GM12878 (cell line): ENCODE measurements at regions of chr3 and their contacts with region 1.

Region 1: GRCh38 chr3:185942907-185943759 is 5.3 kb upstream of the TRA2B start:
- DNase-seq: peak; percentile 51
- ATAC-seq: peak; percentile 98
- H3K4me3 ChIP-seq: no peak overlapping the region
- H3K27ac ChIP-seq: no peak overlapping the region
- H3K4me1 ChIP-seq: peaks cover 5% of the 10 kb centered on the region; the same call in 1 of the 2 replicates
- H3K27me3 ChIP-seq: 0 out of 4 replicates have a peak, but pooled peaks cover 0 to 3% of the 10 kb centered on the region in 2 experiments
- CTCF ChIP-seq: peak; percentile 94 to 99 (median 99)
- EP300 ChIP-seq: no peak
- POLR2A ChIP-seq: no peak
- RAD21 ChIP-seq: peak; percentile 67

Region 2: DNA sequence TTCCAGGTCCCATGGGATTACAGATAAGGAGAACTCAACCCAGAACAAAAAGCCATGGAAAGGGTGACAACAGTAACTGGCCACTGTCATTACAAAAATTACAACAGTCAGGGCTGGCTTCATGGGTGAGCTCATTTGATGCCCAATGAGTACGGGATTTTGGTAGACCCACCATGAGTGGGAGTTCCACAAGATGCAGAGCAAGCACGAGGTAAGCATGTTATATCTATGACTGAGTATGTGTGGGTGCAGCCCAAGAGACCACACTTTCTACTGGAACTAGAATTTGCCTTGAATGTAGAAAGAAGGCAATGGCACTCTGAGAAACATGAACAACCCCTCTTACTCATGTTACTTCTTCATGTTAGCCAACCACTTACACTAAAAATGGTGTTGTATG is 201.5 kb before region 1 on chr3:
- CTCF ChIA-PET with region 1: no interaction called
- POLR2A ChIA-PET with region 1: no interaction called
- RAD21 ChIA-PET with region 1: no interaction called
- SMC1A ChIA-PET with region 1: no interaction called
- in situ Hi-C with region 1: no loop called
- intact Hi-C with region 1: no loop called
- DNase-seq: no peak
- ATAC-seq: no peak
- H3K4me3 ChIP-seq: no peak overlapping the region
- H3K27ac ChIP-seq: no peak overlapping the region
- H3K4me1 ChIP-seq: peaks cover 14% of the 10 kb centered on the region
- H3K27me3 ChIP-seq: no peaks in the 10 kb centered on the region; a peak in 1 of 4 replicates
- CTCF ChIP-seq: no peak
- EP300 ChIP-seq: no peak
- POLR2A ChIP-seq: no peak
- RAD21 ChIP-seq: no peak

Region 3: DNA sequence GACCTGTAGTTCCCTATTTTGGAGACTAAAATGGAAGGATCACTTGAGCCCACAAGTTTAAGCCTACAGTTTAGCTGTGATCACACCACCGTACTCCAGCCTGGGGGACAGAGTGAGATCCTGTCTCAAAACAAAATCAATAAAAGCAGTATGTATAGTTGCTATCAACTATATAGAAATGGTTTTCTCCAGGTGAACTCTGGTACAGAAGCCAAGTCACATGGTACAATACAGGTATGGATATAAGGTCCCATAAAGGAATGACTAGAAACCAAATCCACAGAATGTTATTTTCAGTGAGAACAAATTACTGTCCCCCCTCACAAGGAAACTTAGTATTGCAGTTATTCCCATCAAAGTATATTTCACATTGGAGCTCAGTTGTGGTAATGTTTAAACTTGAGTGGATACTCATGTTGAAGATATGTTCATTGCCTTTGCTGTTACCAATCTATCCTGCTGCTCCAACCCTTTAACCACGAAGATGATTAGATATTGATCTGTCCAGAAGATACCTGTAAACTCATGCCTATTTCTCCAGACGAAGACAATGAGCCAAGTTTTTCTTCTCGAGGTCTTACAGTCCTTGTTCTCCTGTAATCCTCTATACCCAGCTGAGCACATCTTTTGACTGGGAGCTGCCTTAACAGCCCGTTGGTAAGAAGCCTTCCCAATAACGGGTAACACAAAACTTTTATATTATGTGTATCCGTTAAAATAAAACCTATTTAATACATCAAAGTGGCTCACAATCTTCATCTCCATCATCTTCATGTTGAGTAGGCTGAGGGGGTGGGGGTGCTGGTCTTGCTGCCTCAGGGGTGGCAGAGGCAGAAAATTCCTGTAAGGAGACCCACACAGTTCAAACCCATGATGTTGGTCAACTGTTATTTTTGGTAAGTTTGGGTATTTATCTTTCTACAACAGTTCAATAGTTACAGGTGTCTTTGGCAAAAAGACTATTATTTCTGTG is 29.9 kb before region 1 on chr3:
- CTCF ChIA-PET with region 1: interaction called, 32 read pairs
- POLR2A ChIA-PET with region 1: interaction called, 5 read pairs
- RAD21 ChIA-PET with region 1: interaction called, 4 read pairs
- SMC1A ChIA-PET with region 1: interaction called, 3 read pairs
- in situ Hi-C with region 1: no loop called
- intact Hi-C with region 1: no loop called
- DNase-seq: no peak
- ATAC-seq: peak; percentile 31
- H3K4me3 ChIP-seq: no peak overlapping the region
- H3K27ac ChIP-seq: no peak overlapping the region
- H3K4me1 ChIP-seq: no peaks in the 10 kb centered on the region
- H3K27me3 ChIP-seq: no peaks in the 10 kb centered on the region
- CTCF ChIP-seq: no peak
- EP300 ChIP-seq: no peak
- POLR2A ChIP-seq: no peak; the same call in 1 of the 2 replicates
- RAD21 ChIP-seq: no peak

Region 4: GRCh38 chr3:185968168-185968567 is 25.0 kb after region 1 on chr3:
- CTCF ChIA-PET with region 1: interaction called, 49 read pairs
- POLR2A ChIA-PET with region 1: interaction called, 4 read pairs
- RAD21 ChIA-PET with region 1: interaction called, 12 read pairs
- SMC1A ChIA-PET with region 1: interaction called, 11 read pairs
- in situ Hi-C with region 1: no loop called
- intact Hi-C with region 1: no loop called
- DNase-seq: no peak
- ATAC-seq: no peak
- H3K4me3 ChIP-seq: no peak overlapping the region
- H3K27ac ChIP-seq: no peak overlapping the region
- H3K4me1 ChIP-seq: no peaks in the 10 kb centered on the region
- H3K27me3 ChIP-seq: no peaks in the 10 kb centered on the region
- CTCF ChIP-seq: no peak
- EP300 ChIP-seq: no peak
- POLR2A ChIP-seq: no peak
- RAD21 ChIP-seq: no peak

Region 5: GRCh38 chr3:186108941-186109865 is 166.1 kb after region 1 on chr3 and contains the start of gene ETV5:
- CTCF ChIA-PET with region 1: interaction called, 13 read pairs
- POLR2A ChIA-PET with region 1: interaction called, 4 read pairs
- RAD21 ChIA-PET with region 1: no interaction called
- SMC1A ChIA-PET with region 1: no interaction called
- in situ Hi-C with region 1: no loop called
- intact Hi-C with region 1: no loop called
- DNase-seq: peak; percentile 90
- ATAC-seq: peak; percentile 96
- H3K4me3 ChIP-seq: peak within 1 kb of the TSS; percentile 79
- H3K27ac ChIP-seq: peak within 1 kb of the TSS; percentile 46; the same call in 1 of the 2 replicates
- H3K4me1 ChIP-seq: peaks cover 24% of the 10 kb centered on the region
- H3K27me3 ChIP-seq: peaks cover 0 to 15% of the 10 kb centered on the region in 2 experiments; a peak in 2 of 4 replicates
- CTCF ChIP-seq: no peak
- EP300 ChIP-seq: no peak
- POLR2A ChIP-seq: peak; percentile 89
- RAD21 ChIP-seq: no peak
- polyA plus RNA-seq, gene ETV5: 5.0 to 5.4 TPM

Region 6: GRCh38 chr3:186241910-186242821 is 299.0 kb after region 1 on chr3:
- CTCF ChIA-PET with region 1: interaction called, 27 read pairs
- POLR2A ChIA-PET with region 1: interaction called, 3 read pairs
- RAD21 ChIA-PET with region 1: interaction called, 8 read pairs
- SMC1A ChIA-PET with region 1: interaction called, 14 read pairs
- in situ Hi-C with region 1: no loop called
- intact Hi-C with region 1: no loop called
- DNase-seq: no peak
- ATAC-seq: peak; percentile 96
- H3K4me3 ChIP-seq: peak overlapping the region; percentile 64
- H3K27ac ChIP-seq: peak overlapping the region; percentile 54
- H3K4me1 ChIP-seq: peaks cover 29% of the 10 kb centered on the region
- H3K27me3 ChIP-seq: no peaks in the 10 kb centered on the region
- CTCF ChIP-seq: peak; percentile 75 to 79 (median 75)
- EP300 ChIP-seq: no peak
- POLR2A ChIP-seq: peak; percentile 42; the same call in 1 of the 2 replicates
- RAD21 ChIP-seq: peak; percentile 89

Region 7: DNA sequence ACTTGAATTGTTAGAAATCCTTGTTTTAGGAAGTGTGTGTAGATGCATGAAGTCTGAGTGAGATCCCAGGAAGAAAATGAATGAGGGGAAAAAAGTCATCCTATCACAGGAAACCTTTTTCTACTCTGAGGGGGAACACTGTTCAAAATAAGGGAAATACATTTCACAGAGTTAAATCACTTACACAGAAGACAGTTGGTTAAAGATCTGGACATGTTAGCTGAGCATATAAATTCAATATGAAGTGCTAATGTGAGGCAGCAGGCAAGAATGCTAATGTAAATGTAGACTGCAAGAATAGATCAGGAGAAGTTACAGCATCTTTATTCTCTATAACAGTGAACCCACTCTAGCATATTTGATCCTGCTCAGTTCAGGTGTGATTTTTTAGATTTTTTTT is 621.5 kb after region 1 on chr3:
- CTCF ChIA-PET with region 1: interaction called, 11 read pairs
- POLR2A ChIA-PET with region 1: interaction called, 3 read pairs
- RAD21 ChIA-PET with region 1: interaction called, 5 read pairs
- SMC1A ChIA-PET with region 1: interaction called, 4 read pairs
- in situ Hi-C with region 1: no loop called
- intact Hi-C with region 1: no loop called
- DNase-seq: no peak
- ATAC-seq: no peak
- H3K4me3 ChIP-seq: no peak overlapping the region
- H3K27ac ChIP-seq: no peak overlapping the region
- H3K4me1 ChIP-seq: peaks cover 6% of the 10 kb centered on the region
- H3K27me3 ChIP-seq: no peaks in the 10 kb centered on the region
- CTCF ChIP-seq: no peak
- EP300 ChIP-seq: no peak
- POLR2A ChIP-seq: no peak
- RAD21 ChIP-seq: no peak